CD4-positive, alpha-beta T cell (primary cell): ENCODE measurements at regions of chr11 and their contacts with region 1.

Region 1: DNA sequence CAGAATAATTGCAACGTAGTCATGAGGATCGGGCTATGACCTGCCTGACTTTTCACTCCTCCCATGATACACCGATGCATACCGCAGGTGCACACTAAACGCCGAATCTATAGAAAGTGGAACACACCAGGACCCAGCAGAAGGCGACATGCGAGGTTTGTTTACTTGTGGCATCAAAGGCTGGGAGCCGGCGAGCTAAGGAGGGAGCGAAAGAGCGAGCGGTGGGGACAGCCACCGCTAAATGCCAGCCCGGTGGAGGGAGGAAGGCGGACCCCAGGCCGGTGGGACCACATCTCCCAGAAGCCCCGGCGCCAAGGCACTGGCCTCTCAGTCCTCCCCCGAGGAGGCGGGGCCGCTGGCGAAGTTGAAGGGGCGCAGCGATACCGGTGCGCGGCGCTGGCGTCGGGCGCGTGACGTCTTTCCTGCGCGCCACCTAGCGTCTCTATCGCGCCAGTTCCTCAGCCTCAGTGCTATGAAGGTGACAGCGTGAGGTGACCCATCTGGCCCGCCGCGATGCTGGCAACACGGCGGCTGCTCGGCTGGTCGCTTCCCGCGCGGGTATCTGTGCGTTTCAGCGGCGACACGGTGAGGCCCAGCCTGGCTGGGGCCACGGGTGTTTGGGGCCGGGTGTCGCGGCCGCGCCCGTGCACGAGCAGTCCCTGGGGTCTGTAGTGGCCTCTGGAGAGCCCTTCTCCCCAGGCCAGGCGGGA is at the start of gene NDUFV1:
- DNase-seq: peak; percentile 93 to 98 (median 96)
- ATAC-seq: peak; percentile 98
- H3K4me3 ChIP-seq: peak within 1 kb of the TSS; percentile 83
- H3K4me3 Mint-ChIP-seq: peak within 1 kb of the TSS; percentile 88
- H3K27ac ChIP-seq: peak within 1 kb of the TSS; percentile 64 to 79
- H3K27ac Mint-ChIP-seq: peak within 1 kb of the TSS; percentile 70
- H3K4me1 ChIP-seq: peaks cover 23% of the 10 kb centered on the region
- H3K4me1 Mint-ChIP-seq: peaks cover 9% of the 10 kb centered on the region
- H3K27me3 ChIP-seq: peaks cover 0 to 3% of the 10 kb centered on the region in 2 experiments
- H3K27me3 Mint-ChIP-seq: peaks cover 11% of the 10 kb centered on the region
- CTCF ChIP-seq: peak; percentile 81
- total RNA-seq, gene NDUFV1: 223 to 224 TPM

Region 2: GRCh38 chr11:67583247-67584204 is 23.1 kb before region 1 on chr11 and contains the start of gene GSTP1:
- CTCF ChIA-PET with region 1: interaction called, 4 read pairs
- POLR2A ChIA-PET with region 1: interaction called, 8 read pairs
- intact Hi-C with region 1: loop called in 1 of 2 experiments (anchors 1 kb)
- DNase-seq: peak; percentile 54 to 90 (median 72)
- ATAC-seq: peak; percentile 77
- H3K4me3 ChIP-seq: peak within 1 kb of the TSS; percentile 58
- H3K4me3 Mint-ChIP-seq: peak within 1 kb of the TSS; percentile 92
- H3K27ac ChIP-seq: peak within 1 kb of the TSS; percentile 64 to 68
- H3K27ac Mint-ChIP-seq: peak within 1 kb of the TSS; percentile 85
- H3K4me1 ChIP-seq: peaks cover 34% of the 10 kb centered on the region
- H3K4me1 Mint-ChIP-seq: peaks cover 47% of the 10 kb centered on the region
- H3K27me3 ChIP-seq: peaks cover 0 to 3% of the 10 kb centered on the region in 2 experiments
- H3K27me3 Mint-ChIP-seq: no peaks in the 10 kb centered on the region
- CTCF ChIP-seq: peak; percentile 55
- total RNA-seq, gene GSTP1: 60.1 to 62.8 TPM